ENCODE measurements at regions of chr5 and their contacts with region 1.

Region 1: GRCh38 chr5:188488-189481 is 2.5 kb upstream of the LRRC14B start:
- DNase-seq: peak; percentile 95
- CTCF ChIP-seq: peak; percentile 93

Region 2: DNA sequence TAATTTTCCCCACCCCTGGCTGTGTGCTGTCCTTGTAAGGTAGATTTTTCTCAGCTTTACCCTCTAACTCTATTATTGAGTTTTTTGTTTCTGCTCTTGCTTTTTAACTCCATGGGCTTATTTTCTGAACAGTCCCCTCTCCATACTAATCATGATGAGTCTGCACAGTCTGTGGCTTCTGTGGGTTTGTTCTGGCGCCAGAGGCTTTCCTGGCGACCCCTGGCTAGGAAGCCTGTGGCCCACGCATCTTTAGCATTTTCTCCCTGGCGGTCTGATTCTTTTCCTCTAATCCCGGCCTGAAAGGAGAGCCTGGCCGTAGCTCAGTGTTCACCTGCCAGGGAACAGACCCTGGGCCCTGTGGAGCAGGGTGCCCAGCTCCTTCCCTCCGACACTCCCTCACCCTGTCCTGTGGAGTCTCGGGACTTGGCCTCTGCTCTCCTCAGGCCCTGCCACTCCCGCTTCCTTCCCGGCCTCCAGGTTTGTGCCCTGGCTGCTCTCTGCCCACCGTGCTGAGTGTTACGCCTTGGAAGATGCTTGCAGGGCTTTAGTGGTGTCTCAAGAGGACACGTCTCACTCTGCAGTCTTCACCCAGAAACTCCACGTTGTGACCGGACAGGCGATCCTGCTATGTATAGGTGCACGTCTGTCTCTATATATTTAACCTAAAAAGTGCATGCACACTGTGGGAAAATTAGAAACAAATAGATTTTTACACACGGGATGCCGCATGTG is 29.2 kb before region 1 on chr5:
- CTCF ChIA-PET with region 1: no interaction called
- POLR2A ChIA-PET with region 1: no interaction called
- DNase-seq: no peak
- CTCF ChIP-seq: no peak

Region 3: DNA sequence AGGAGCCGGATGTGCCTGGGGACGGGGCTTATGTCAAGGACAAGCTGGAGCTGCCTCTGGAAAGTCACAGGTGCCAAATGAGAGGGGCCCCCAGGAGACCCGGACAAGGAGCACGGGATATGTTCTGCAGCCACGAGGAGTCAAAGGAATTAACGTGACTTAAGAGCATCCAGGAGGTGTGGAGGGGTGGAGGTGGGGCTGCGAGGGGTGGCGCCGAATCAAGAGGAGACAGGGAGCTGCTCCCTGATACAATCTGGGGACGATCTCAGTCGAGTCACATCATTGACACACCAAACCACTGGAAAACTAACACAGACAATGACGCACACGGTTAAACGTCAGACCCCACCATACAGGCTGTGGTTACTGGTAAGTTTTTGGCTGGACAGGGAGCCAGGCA is 18.8 kb after region 1 on chr5:
- CTCF ChIA-PET with region 1: interaction called, 10 read pairs
- POLR2A ChIA-PET with region 1: no interaction called
- DNase-seq: no peak
- CTCF ChIP-seq: no peak

Region 4: GRCh38 chr5:217860-218456 is 29.2 kb after region 1 on chr5 and contains the starts of genes CCDC127 and SDHA:
- CTCF ChIA-PET with region 1: interaction called, 17 read pairs
- POLR2A ChIA-PET with region 1: no interaction called
- DNase-seq: peak; percentile 100
- CTCF ChIP-seq: peak; percentile 37

Region 5: DNA sequence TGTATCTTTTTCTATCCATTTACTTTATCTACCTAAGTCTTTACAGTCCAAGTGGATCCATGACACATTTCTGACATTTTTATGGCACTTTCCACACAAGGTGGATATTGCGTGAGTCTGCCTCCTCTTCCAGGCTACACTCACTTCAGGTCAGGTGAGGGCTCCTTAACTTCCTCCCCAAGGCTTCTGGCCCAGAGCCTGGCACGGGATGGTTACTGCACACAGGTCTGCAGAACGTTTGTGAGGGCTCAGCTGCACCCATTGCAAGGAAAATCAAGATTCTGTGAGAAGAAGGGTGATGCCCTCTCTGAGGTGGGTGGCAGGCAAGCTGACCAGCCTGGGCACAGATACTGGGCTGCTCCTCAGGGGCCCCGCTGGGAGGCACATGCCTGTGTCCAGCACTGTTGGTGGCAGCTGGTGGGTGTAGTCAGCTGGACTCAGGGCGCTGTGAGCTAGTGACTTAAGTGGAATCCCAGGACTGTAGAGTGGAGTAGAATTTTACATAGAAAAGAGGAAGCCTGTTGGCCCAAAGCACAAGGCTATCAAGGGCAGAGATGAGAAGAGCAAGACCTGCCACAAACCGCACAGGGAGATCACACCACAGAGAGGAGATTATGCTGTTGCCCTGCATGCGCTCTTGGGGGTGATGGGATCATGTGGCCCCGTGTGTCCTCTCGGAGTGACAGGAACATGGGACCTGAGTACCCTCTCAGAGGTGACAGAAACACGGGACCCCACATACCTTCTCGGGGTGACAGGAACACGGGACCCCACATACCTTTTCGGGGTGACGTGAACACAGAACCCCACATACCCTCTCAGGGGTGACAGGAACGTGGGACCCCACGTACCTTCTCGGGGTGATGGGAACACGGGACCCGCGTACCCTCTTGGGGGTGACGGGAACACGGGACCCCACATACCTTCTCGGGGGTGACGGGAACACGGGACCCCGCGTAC is 154.0 kb after region 1 on chr5:
- CTCF ChIA-PET with region 1: no interaction called
- POLR2A ChIA-PET with region 1: no interaction called
- DNase-seq: peak; percentile 32
- CTCF ChIP-seq: no peak

Region 6: GRCh38 chr5:352639-353611 is 164.1 kb after region 1 on chr5:
- CTCF ChIA-PET with region 1: no interaction called
- POLR2A ChIA-PET with region 1: no interaction called
- DNase-seq: peak; percentile 24
- CTCF ChIP-seq: no peak

Region 7: GRCh38 chr5:522899-523440 is 334.2 kb after region 1 on chr5:
- CTCF ChIA-PET with region 1: no interaction called
- POLR2A ChIA-PET with region 1: no interaction called
- DNase-seq: no peak
- CTCF ChIP-seq: no peak